Activated CD4-positive, alpha-beta memory T cell treated with anti-CD3 and anti-CD28 coated beads, Interleukin-2, amount 10 ng/mL, durations not matched to agents 7 days and 5 days (primary cell): ENCODE measurements at regions of chr16 and their contacts with region 1.

Region 1: GRCh38 chr16:2438121-2438520 is 8.9 kb downstream of the CCNF start:
- DNase-seq: no peak
- H3K4me3 Mint-ChIP-seq: no peak overlapping the region
- H3K27ac Mint-ChIP-seq: no peak overlapping the region
- H3K4me1 Mint-ChIP-seq: peaks cover 27% of the 10 kb centered on the region
- H3K27me3 Mint-ChIP-seq: no peaks in the 10 kb centered on the region

Region 2: DNA sequence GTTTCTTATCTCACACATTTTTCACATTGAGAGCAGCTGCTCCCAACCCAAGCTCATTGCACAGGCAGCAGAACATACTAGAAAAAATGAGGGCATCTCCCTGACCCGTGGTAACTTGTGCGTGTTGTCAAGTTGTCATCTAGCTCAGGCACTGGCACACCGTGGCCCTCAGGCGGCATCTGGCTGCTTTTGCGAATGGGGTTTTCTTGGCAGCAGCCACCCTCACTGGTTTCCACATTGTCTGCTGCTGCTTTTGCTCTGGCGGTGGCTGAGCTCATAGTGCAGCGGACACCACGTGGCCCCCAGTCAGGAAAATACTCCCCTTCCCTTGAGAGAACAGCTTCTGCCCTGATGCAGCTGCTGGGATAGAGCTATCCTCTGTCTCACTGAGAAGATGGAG is 12.4 kb after region 1 on chr16:
- CTCF ChIA-PET with region 1: no interaction called
- POLR2A ChIA-PET with region 1: interaction called, 13 read pairs
- DNase-seq: no peak
- H3K4me3 Mint-ChIP-seq: no peak overlapping the region
- H3K27ac Mint-ChIP-seq: no peak overlapping the region
- H3K4me1 Mint-ChIP-seq: no peaks in the 10 kb centered on the region
- H3K27me3 Mint-ChIP-seq: no peaks in the 10 kb centered on the region